Activated T-helper 2 cell treated with anti-CD3 and anti-CD28 coated beads, Interferon-gamma antibody, Interleukin-2, Interleukin-4, amounts not matched to agents 10 μg/mL and 5 μg/mL and 100 μg/mL, durations not matched to agents 14 hours and 24 hours and 36 hours (primary cell): ENCODE measurements at regions of chr1 and their contacts with region 1.

Region 1: GRCh38 chr1:32107742-32108661 is at the start of gene KPNA6:
- DNase-seq: peak; percentile 90
- H3K4me3 Mint-ChIP-seq: peak within 1 kb of the TSS; percentile 98
- H3K27ac Mint-ChIP-seq: peak within 1 kb of the TSS; percentile 97
- H3K4me1 Mint-ChIP-seq: peaks cover 32% of the 10 kb centered on the region
- H3K27me3 Mint-ChIP-seq: no peaks in the 10 kb centered on the region
- total RNA-seq, gene KPNA6: 81.2 and 84.0 TPM in 2 replicates

Region 2: DNA sequence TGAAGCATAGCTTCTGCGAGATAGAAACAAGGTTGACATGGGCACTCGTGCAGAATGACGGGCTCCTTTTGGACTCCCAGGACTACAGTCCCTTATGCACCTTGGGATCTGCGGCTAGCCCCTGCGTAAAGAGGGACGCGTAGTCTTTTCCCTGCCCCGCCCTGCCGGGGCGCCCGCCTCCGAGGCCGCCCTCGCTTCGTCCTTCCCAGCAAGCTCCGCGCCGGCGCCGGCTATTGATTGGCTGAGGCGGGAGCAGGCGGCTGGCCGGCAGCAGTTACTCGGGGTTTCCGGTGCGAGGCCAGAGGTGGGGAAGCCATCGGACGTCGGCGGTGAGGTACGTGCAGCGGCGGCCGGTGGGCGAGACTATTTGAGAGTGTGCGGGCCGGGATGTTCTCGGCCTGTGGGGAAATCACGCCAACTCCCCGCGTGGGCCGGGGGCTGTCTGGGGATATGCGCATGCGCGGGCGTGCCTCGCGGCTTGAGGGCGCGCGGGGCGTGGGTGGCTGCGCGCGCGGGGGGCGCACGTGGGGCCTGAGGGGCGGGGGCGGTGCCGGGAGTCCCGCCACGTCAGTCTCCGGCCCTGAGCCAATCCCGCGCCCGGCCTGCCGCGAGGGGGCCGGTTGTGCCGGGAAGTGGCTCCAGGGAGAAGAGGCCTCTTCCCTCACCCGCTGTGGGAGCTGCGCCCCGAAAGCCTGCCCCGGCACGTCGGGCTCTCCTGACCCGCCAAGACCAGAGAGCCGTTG is 71.6 kb after region 1 on chr1 and contains the start of gene TXLNA:
- intact Hi-C with region 1: loop called (anchors 1 kb)
- DNase-seq: peak; percentile 87
- H3K4me3 Mint-ChIP-seq: peak within 1 kb of the TSS; percentile 97
- H3K27ac Mint-ChIP-seq: peak within 1 kb of the TSS; percentile 98
- H3K4me1 Mint-ChIP-seq: peaks cover 34% of the 10 kb centered on the region
- H3K27me3 Mint-ChIP-seq: no peaks in the 10 kb centered on the region
- total RNA-seq, gene TXLNA: 98.6 and 101 TPM in 2 replicates